ENCODE measurements at regions of chr9 and their contacts with region 1.

Region 1: GRCh38 chr9:121698627-121699570 is 47.5 kb downstream of the DAB2IP start:
- DNase-seq: peak; percentile 86
- ATAC-seq: peak; percentile 18

Region 2: GRCh38 chr9:121455527-121456239 is 243.2 kb before region 1 on chr9:
- intact Hi-C with region 1: loop called (anchors 10 kb)
- DNase-seq: no peak
- ATAC-seq: no peak

Region 3: DNA sequence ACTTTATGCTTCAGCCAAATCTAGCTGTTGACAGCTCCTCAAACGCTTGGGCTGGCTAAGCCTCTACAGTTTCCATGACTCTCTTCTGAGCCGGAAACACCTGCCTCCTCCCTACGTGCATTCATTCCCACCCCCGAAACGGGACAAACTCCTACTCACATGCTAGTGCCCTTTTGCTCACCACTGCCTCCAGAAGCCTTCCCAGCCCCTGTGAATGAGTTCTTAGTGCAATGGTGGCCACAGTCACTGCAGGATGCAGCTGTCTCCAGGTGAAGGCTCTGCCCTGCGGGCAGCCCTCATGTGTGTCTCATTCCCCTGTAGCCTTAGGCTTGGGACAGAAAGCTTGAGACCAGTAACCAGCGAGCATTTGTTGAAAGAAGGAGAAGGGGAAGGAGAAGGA is 116.2 kb before region 1 on chr9:
- intact Hi-C with region 1: no loop called
- DNase-seq: no peak
- ATAC-seq: no peak

Region 4: GRCh38 chr9:121650217-121651007 is 48.5 kb before region 1 on chr9:
- intact Hi-C with region 1: loop called (anchors 5 kb)
- DNase-seq: no peak
- ATAC-seq: peak; percentile 25

Region 5: GRCh38 chr9:121861501-121862180 is 162.7 kb after region 1 on chr9:
- intact Hi-C with region 1: loop called (anchors 5 kb)
- DNase-seq: no peak
- ATAC-seq: peak; percentile 73

Measured in Right ventricle myocardium inferior (tissue), 1 donor.